Heart left ventricle (tissue), 16 donors: ENCODE measurements at regions of chr6 and their contacts with region 1.

Region 1: DNA sequence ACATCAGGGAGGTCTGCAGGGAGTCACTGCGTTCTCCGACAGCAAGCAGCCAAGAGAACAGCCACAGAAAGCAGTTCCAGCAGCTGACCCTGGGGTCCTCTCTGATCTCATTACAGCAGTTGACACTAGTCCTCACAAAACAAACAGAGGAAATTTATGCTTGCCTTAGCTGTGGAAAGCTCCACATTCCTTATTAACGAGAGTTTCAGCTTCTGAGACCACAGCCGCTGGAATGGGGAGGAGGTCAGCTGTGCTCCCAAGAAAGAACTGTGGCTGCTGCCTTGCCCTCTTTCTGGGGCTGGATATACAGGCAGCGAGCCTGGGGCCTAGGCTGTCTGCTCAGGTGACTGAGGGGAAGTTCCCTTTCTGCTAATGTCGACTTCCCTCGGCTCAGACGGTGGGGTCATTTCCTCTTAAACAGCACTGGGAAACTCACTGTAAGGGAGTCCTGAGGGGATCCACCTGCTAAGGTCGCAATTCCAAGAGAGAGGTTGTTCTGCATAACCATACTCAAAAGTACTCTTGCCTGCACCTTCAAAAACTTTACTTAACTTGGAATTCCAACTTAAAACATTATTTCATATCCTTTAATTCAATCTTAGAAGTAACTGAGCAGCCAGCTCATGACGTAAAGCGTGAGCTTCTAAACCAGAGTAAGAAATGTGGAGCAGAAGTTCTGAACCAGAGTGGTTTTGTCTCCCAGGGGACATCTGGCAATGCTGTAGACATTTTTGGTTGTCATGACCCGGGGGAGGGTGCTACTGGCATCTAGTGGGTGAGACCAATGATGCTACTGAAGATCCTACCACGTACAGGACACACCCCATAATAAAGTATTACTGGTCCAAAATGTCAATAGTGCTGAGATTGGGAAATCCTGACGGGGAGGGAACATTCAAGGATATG is 80.3 kb downstream of the BACH2 start:
- DNase-seq: peak in 1 of 5 donors; percentile 16
- ATAC-seq: no peak
- H3K4me3 ChIP-seq: no peak overlapping the region
- H3K27ac ChIP-seq: peak overlapping the region in 7 of 12 donors; percentile 12 to 88 (median 36)
- H3K4me1 ChIP-seq: peaks cover 0 to 56% (median 37%) of the 10 kb centered on the region in 12 donors
- H3K27me3 ChIP-seq: no peaks in the 10 kb centered on the region
- CTCF ChIP-seq: no peak
- POLR2A ChIP-seq: no peak

Region 2: DNA sequence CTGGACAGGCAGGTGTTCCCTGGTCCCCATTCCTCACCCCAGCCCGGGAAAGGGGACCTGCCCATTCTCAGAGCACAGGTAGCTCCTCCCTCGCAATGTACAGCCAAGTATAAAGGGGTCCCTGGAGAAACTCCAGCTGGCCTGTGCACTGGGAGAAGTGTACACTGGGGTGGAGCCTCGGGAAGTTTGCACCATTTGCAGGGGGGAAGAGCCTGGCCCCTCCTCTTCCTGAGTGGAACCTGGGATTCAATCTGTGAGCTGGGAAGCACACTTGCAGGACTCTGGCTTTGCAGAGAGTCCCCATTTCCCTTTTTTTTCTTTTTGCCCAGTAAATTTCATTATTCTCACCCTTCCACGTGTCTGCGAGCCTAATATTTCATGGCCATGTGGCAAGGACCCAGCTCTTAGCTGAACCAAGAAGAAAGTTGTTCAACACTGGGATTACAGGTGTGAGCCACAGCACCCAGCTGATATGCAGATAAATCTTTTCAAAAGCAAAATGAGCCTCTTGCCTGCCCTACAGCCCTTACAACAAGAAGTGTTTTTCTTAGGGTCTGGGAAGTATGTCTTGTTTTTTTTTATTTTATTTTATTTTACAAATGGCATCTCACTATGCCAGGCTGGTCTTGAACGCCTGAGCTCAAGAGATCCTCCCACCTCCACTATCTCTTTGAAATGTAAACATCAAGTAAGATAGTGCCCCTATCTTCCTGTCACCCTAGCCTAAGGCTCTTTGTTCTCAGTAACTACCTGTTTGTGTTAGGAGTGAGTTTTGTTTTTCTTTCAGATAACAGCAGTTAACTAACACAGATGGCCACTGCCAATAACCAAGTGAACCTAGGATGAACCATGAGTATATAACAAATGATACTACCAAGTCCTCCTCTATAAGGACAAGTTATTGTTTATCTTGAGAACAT is 1243.6 kb before region 1 on chr6:
- intact Hi-C with region 1: no loop called
- DNase-seq: no peak
- ATAC-seq: no peak
- H3K4me3 ChIP-seq: no peak overlapping the region
- H3K27ac ChIP-seq: no peak overlapping the region
- H3K4me1 ChIP-seq: no peaks in the 10 kb centered on the region
- H3K27me3 ChIP-seq: no peaks in the 10 kb centered on the region
- CTCF ChIP-seq: no peak
- POLR2A ChIP-seq: no peak

Region 3: GRCh38 chr6:89977808-89978748 is 238.2 kb before region 1 on chr6:
- intact Hi-C with region 1: loop called in 2 of 10 experiments (anchors 5 to 10 kb)
- DNase-seq: peak in 3 of 5 donors; percentile 35 to 63 (median 41)
- ATAC-seq: peak; percentile 76 to 85 (median 80)
- H3K4me3 ChIP-seq: no peak overlapping the region
- H3K27ac ChIP-seq: peak overlapping the region in 7 of 12 donors; percentile 7 to 48 (median 35)
- H3K4me1 ChIP-seq: peaks cover 0 to 38% (median 12%) of the 10 kb centered on the region in 12 donors
- H3K27me3 ChIP-seq: no peaks in the 10 kb centered on the region
- CTCF ChIP-seq: no peak
- POLR2A ChIP-seq: no peak

Region 4: GRCh38 chr6:89984926-89985750 is 231.2 kb before region 1 on chr6:
- intact Hi-C with region 1: loop called in 2 of 10 experiments (anchors 5 kb)
- DNase-seq: peak; percentile 89 to 94 (median 91)
- ATAC-seq: peak; percentile 88 to 96 (median 89)
- H3K4me3 ChIP-seq: peak overlapping the region in 1 of 12 donors; percentile 4
- H3K27ac ChIP-seq: peak overlapping the region in 10 of 12 donors; percentile 22 to 76 (median 67)
- H3K4me1 ChIP-seq: peaks cover 0 to 29% (median 23%) of the 10 kb centered on the region in 12 donors
- H3K27me3 ChIP-seq: no peaks in the 10 kb centered on the region
- CTCF ChIP-seq: no peak
- POLR2A ChIP-seq: no peak

Region 5: GRCh38 chr6:90098001-90098531 is 118.3 kb before region 1 on chr6:
- intact Hi-C with region 1: loop called in 1 of 10 experiments (anchors 10 kb)
- DNase-seq: peak in 4 of 5 donors; percentile 29 to 57 (median 50)
- ATAC-seq: peak; percentile 85 to 94 (median 88)
- H3K4me3 ChIP-seq: no peak overlapping the region
- H3K27ac ChIP-seq: peak overlapping the region in 11 of 12 donors; percentile 44 to 84 (median 68)
- H3K4me1 ChIP-seq: peaks cover 0 to 43% (median 22%) of the 10 kb centered on the region in 12 donors
- H3K27me3 ChIP-seq: no peaks in the 10 kb centered on the region
- CTCF ChIP-seq: peak in 11 of 12 donors; percentile 3 to 66 (median 42)
- POLR2A ChIP-seq: no peak